Ascending aorta (tissue), 2 donors: ENCODE measurements at regions of chr5 and their contacts with region 1.

Region 1: DNA sequence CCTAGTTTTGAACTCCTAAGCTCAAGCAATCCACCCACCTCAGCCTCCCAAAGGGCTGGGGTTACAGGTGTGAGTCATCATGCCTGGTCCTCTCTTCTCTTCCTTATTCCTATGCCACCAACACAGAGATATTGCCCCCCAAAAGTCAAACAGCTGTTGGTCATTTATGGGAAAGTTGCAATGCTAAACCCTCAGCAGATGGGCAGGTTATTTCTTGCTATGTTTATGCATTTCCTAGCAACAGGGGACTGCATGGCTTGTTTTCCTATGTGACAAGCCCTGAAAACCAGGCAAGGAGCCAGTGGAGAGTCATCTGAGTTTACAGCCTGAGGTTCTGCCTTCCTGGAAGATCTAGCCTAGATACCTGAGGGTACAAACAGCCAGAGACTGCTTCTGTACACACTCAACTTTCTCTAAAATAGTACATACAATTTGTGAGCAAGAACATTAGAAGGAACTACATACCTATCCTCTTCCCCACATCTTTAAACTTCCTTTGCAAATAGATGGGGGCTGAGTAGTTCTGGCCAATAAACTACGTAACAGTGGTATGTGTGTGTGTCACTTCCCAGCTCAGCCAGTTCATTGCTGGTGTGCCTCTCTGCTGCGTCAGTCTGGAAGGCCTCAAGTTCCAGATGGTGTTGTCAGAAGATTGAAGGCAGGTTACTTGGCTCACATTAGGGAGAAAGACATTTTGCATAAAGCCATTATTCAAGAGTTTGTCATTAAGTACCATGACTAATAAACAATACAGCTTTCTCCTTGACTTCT is 65.4 kb downstream of the CSNK1A1 start:
- DNase-seq: peak; percentile 43 to 97
- H3K4me3 ChIP-seq: no peak overlapping the region
- H3K27ac ChIP-seq: peak overlapping the region; percentile 81 to 93
- H3K4me1 ChIP-seq: peaks cover 13 to 64% of the 10 kb centered on the region in 2 donors
- H3K27me3 ChIP-seq: no peaks in the 10 kb centered on the region
- CTCF ChIP-seq: peak in 1 of 3 experiments; percentile 6

Region 2: DNA sequence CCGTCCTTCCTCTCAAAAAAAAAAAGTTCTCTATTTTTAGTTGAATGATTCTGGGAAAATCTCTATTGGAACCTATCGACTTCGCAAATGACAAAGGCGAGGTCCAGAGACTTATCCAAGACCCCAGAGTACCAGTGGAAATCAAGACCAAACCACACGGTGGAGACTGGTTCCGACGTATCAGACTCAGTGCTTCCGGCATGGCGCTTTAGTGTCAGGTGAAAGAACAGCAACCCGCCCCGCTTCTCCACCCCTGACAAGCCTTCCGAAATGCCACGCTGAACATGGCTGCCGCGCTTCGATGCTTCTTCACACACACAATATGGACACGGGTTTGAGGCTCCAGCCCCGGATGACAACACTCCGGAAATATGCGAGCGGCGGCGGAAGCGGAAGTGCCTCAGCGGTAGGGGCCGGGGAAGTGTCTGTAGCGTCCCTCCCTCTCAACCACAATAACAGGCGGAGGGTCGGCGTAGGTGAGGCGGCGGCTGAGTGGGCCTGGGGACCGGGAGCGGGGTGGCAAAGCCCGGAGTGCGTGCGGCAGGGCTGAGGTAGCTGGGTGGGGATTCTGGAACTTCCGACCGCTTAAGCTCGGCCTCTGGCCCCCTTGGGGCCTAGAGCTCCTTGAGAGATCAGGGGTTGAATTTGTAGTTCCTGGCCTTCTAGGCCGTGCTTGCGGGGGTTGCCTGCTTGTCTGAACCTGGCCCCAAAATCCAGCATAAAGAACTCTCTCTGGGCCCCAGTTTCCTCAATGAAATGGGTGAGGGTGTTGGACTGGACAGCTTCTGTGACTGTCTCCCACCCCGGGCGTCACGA is 1102.1 kb before region 1 on chr5 and contains the start of gene FBXO38:
- intact Hi-C with region 1: no loop called
- DNase-seq: peak; percentile 96 to 99
- H3K4me3 ChIP-seq: peak within 1 kb of the TSS; percentile 84 to 99
- H3K27ac ChIP-seq: peak within 1 kb of the TSS; percentile 85 to 94
- H3K4me1 ChIP-seq: peaks cover 6 to 22% of the 10 kb centered on the region in 2 donors
- H3K27me3 ChIP-seq: no peaks in the 10 kb centered on the region
- CTCF ChIP-seq: peak in 2 of 3 experiments; percentile 5 to 7
- total RNA-seq, gene FBXO38: 12.1 TPM

Region 3: GRCh38 chr5:149392718-149393117 is 93.1 kb before region 1 on chr5:
- intact Hi-C with region 1: no loop called
- DNase-seq: no peak
- H3K4me3 ChIP-seq: no peak overlapping the region
- H3K27ac ChIP-seq: no peak overlapping the region
- H3K4me1 ChIP-seq: peaks cover 3 to 20% of the 10 kb centered on the region in 2 donors
- H3K27me3 ChIP-seq: no peaks in the 10 kb centered on the region
- CTCF ChIP-seq: no peak

Region 4: GRCh38 chr5:149452007-149452664 is 33.7 kb before region 1 on chr5:
- intact Hi-C with region 1: loop called (anchors 2 kb)
- DNase-seq: peak in 1 of 2 donors; percentile 86
- H3K4me3 ChIP-seq: no peak overlapping the region
- H3K27ac ChIP-seq: peak overlapping the region; percentile 88 to 91
- H3K4me1 ChIP-seq: peaks cover 24 to 67% of the 10 kb centered on the region in 2 donors
- H3K27me3 ChIP-seq: no peaks in the 10 kb centered on the region
- CTCF ChIP-seq: no peak

Region 5: DNA sequence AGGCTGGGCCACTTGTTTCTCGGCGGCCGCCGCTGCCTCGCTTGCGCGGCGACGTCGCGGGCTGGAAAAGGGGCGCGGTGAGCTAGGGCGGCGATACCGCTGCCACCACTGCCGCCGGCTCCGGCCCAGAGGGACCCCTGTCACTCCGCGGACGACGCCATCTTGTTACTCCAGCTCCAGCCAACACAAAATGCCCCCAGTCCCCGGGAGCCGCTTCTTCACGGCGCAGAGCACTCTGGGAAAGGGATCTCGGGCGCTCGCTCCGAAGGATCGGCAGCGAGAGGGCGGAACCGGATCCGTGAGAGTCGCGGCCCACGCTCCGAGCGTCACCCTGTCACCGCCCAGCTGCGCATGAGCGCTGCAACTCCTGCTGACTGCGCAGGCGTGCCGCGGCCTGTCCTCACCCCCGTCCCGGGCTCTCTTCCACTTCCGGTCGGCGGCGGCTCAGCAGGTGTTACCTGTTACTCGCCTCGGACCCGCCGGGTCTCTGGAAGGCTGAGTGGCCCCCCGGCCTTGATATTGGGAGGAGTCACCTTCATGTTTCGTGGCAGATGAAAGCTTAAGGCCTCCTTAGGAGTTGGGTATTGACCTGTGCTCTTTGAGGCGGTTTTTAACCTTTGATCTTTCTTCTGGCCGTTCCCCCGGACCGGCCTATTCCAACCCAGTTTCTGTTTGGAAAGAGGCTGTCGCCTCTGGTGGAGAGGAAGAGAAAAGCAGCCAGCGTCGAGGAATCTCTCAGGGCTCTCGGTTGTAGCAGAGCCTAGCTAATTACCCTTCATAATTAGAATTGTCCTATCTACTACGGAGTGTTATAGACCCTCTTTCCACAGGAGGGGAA is 65.6 kb after region 1 on chr5 and contains the start of gene CSNK1A1:
- intact Hi-C with region 1: loop called (anchors 1 kb)
- DNase-seq: peak; percentile 86 to 98
- H3K4me3 ChIP-seq: peak within 1 kb of the TSS; percentile 81 to 96
- H3K27ac ChIP-seq: peak within 1 kb of the TSS; percentile 95 to 98
- H3K4me1 ChIP-seq: peaks cover 7 to 26% of the 10 kb centered on the region in 2 donors
- H3K27me3 ChIP-seq: no peaks in the 10 kb centered on the region
- CTCF ChIP-seq: peak; percentile 88 to 93 (median 91)
- total RNA-seq, gene CSNK1A1: 219 TPM